ENCODE measurements at regions of chr5 and their contacts with region 1.

Region 1: GRCh38 chr5:172721301-172722130 is 49.5 kb downstream of the DUSP1 start:
- DNase-seq: peak; percentile 95
- H3K4me3 ChIP-seq: no peak overlapping the region
- H3K27ac ChIP-seq: no peak overlapping the region
- H3K4me1 ChIP-seq: peaks cover 8% of the 10 kb centered on the region
- H3K27me3 ChIP-seq: no peaks in the 10 kb centered on the region
- CTCF ChIP-seq: no peak
- POLR2A ChIP-seq: no peak

Region 2: DNA sequence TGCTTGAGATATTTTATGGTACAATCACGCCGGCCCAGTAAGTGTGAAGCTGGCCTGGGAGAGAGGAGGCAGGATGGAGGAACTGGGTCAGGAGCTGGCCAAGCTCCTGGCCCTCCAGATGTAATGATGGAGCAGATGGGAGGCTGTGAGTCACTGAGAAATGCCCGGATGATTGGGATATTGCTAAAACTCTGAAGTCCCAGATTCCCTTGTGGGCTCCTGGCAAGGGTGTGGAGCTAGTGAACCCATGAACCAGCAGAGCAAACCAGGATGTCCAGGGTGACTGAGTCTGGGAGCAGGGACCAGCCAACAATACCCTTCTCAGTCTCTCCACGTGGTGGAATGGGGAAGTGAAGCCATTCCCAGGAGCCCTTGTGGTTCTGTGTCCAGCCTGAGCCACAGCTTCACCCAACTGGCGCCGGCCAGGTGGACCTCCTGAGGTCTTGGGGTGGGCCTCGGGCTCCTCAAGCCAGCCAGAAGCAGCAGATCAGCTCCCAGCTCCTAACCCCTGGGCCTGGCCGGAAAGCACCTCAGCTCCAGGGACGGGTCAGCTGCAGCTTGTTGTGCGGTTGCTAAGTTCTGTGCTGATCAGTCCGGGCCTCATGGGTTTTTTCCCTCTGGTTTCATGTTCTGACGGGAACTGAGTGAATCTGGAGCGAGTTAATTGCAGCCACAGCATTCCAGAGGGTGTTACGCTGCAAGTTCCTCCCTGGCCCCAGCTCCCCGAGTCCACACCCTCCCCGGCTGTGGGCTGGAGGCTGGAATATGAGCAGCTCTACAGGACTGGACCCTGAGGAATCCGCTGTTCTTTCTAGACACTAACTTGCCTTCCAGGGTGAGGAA is 11.8 kb after region 1 on chr5:
- CTCF ChIA-PET with region 1: interaction called, 17 read pairs
- POLR2A ChIA-PET with region 1: no interaction called
- dilution Hi-C with region 1: no loop called
- intact Hi-C with region 1: loop called (anchors 1 kb)
- DNase-seq: peak; percentile 62
- H3K4me3 ChIP-seq: no peak overlapping the region
- H3K27ac ChIP-seq: peak overlapping the region; percentile 24
- H3K4me1 ChIP-seq: peaks cover 9% of the 10 kb centered on the region
- H3K27me3 ChIP-seq: no peaks in the 10 kb centered on the region
- CTCF ChIP-seq: no peak
- POLR2A ChIP-seq: no peak

Region 3: GRCh38 chr5:172748341-172748843 is 26.9 kb after region 1 on chr5:
- CTCF ChIA-PET with region 1: interaction called, 6 read pairs
- POLR2A ChIA-PET with region 1: no interaction called
- dilution Hi-C with region 1: no loop called
- intact Hi-C with region 1: loop called (anchors 1 kb)
- DNase-seq: peak; percentile 96
- H3K4me3 ChIP-seq: no peak overlapping the region
- H3K27ac ChIP-seq: peak overlapping the region; percentile 79
- H3K4me1 ChIP-seq: peaks cover 13% of the 10 kb centered on the region
- H3K27me3 ChIP-seq: no peaks in the 10 kb centered on the region
- CTCF ChIP-seq: no peak
- POLR2A ChIP-seq: peak; percentile 52

Region 4: GRCh38 chr5:172795318-172795977 is 73.9 kb after region 1 on chr5:
- CTCF ChIA-PET with region 1: no interaction called
- POLR2A ChIA-PET with region 1: no interaction called
- dilution Hi-C with region 1: no loop called
- intact Hi-C with region 1: no loop called
- DNase-seq: peak; percentile 96
- H3K4me3 ChIP-seq: no peak overlapping the region
- H3K27ac ChIP-seq: peak overlapping the region; percentile 76
- H3K4me1 ChIP-seq: peaks cover 48% of the 10 kb centered on the region
- H3K27me3 ChIP-seq: no peaks in the 10 kb centered on the region
- CTCF ChIP-seq: no peak
- POLR2A ChIP-seq: no peak

Region 5: DNA sequence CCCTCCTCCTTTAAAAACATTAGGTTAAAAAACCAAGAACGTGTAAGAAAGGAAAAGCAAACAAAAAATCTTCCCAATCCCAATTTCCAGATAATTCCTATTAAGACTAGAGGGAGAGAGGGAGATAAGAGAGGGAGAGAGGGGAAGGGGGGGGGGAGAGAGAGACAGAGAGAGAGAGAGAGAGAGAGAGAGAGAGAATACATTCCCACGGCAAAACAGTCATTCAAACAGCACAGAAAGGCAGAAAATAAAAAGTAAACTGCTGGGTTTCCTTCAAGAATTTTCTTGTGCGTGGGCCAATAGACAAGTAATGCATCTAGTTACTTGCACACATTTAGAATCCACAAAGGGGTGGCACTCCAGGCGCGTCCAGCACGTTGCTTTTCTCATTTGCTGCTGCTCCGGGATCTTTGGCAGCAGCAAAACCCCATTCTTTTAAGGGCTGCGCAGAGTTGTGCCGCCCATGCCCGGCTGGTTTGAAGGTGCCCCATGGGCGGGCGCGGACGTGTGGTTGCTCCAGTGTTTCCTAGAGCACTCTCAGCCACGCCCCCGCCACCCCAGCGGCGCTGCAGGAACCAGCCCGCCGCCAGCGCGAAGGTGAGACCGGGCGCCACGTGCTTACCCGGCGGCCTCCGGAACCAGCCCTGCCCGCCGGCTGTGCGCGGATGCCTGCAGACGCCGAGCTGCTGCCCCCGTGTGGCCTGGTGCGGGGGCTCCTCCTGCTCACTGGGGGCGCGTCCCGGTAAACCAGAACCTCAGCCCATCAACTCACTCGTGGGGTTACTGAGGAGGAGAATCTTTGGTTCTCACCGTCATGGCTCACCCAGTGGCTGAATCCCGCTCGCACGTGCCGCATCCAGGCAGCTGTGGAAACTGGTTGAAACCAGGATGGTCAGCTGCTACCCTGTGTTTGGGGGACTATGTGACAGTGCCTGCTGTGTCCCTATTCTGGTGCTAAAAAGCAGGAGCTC is 562.1 kb after region 1 on chr5:
- CTCF ChIA-PET with region 1: no interaction called
- POLR2A ChIA-PET with region 1: no interaction called
- dilution Hi-C with region 1: no loop called
- intact Hi-C with region 1: no loop called
- DNase-seq: peak; percentile 62
- H3K4me3 ChIP-seq: no peak overlapping the region
- H3K27ac ChIP-seq: no peak overlapping the region
- H3K4me1 ChIP-seq: peaks cover 2% of the 10 kb centered on the region
- H3K27me3 ChIP-seq: peaks cover 16 to 18% of the 10 kb centered on the region in 2 experiments
- CTCF ChIP-seq: peak; percentile 84 to 89
- POLR2A ChIP-seq: no peak

Measured in endothelial cell of umbilical vein (primary cell).